Common myeloid progenitor, CD34-positive (primary cell): ENCODE measurements at regions of chr7 and their contacts with region 1.

Region 1: GRCh38 chr7:71733107-71733870 is 601.3 kb downstream of the GALNT17 start:
- DNase-seq: peak; percentile 72 to 84 (median 79)
- H3K4me3 ChIP-seq: peak overlapping the region in 4 of 7 experiments; percentile 27 to 58 (median 54)
- H3K27ac ChIP-seq: no peak overlapping the region
- H3K4me1 ChIP-seq: peaks cover 0 to 5% (median 3%) of the 10 kb centered on the region in 4 experiments
- H3K27me3 ChIP-seq: peaks cover 0 to 5% (median 0%) of the 10 kb centered on the region in 5 experiments

Region 2: GRCh38 chr7:70829221-70830059 is 903.8 kb before region 1 on chr7:
- CTCF ChIA-PET with region 1: interaction called, 11 read pairs
- POLR2A ChIA-PET with region 1: no interaction called
- DNase-seq: peak; percentile 53 to 79 (median 75)
- H3K4me3 ChIP-seq: peak overlapping the region in 5 of 7 experiments; percentile 6 to 63 (median 43)
- H3K27ac ChIP-seq: no peak overlapping the region
- H3K4me1 ChIP-seq: peaks cover 0 to 7% (median 7%) of the 10 kb centered on the region in 4 experiments
- H3K27me3 ChIP-seq: peaks cover 0 to 17% (median 9%) of the 10 kb centered on the region in 5 experiments

Region 3: GRCh38 chr7:70856866-70857630 is 876.2 kb before region 1 on chr7:
- CTCF ChIA-PET with region 1: interaction called, 48 read pairs
- POLR2A ChIA-PET with region 1: no interaction called
- DNase-seq: peak; percentile 46 to 66 (median 50)
- H3K4me3 ChIP-seq: no peak overlapping the region
- H3K27ac ChIP-seq: no peak overlapping the region
- H3K4me1 ChIP-seq: no peaks in the 10 kb centered on the region
- H3K27me3 ChIP-seq: no peaks in the 10 kb centered on the region

Region 4: DNA sequence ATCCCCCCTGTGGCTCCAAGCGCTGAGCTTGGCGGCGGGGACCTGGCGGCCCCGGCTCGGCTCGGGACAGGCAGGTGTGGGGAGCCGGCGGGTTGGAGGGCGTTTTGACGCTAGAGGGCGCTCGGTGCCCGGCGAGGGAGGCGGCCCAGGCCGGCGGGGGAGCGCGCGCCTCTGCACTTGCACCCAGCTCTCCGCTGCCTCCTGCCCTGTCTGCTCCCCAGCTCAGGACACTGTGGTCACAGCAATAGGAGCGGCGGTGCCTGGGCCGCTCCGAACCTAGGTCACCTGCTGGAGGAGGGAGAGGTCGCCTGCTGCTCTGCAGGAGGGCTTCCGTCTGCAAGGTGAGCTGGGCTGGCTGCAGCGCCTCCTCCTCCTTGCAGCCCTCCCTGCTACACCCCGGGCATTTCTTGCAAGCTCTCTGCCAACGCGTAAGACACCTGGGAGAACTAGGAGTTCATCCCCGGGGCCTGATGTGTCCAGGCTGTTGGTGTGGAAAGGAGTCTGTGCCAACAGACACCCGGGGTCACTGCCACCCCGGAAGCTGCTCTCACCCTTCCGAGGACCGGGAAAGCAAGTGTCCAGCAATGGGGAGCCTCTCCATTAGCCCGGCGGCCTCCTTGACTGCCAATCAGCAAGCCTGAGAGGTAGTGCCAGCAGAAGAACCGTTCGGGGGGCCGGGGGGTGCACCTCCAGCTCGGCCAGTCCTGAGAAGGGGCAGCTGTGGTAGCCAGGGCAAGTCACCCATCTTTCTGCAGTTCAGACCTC is 19.1 kb after region 1 on chr7:
- CTCF ChIA-PET with region 1: interaction called, 12 read pairs
- POLR2A ChIA-PET with region 1: no interaction called
- DNase-seq: peak; percentile 48 to 75 (median 71)
- H3K4me3 ChIP-seq: peak overlapping the region in 5 of 7 experiments; percentile 8 to 69 (median 36)
- H3K27ac ChIP-seq: no peak overlapping the region
- H3K4me1 ChIP-seq: peaks cover 0 to 13% (median 9%) of the 10 kb centered on the region in 4 experiments
- H3K27me3 ChIP-seq: no peaks in the 10 kb centered on the region

Region 5: DNA sequence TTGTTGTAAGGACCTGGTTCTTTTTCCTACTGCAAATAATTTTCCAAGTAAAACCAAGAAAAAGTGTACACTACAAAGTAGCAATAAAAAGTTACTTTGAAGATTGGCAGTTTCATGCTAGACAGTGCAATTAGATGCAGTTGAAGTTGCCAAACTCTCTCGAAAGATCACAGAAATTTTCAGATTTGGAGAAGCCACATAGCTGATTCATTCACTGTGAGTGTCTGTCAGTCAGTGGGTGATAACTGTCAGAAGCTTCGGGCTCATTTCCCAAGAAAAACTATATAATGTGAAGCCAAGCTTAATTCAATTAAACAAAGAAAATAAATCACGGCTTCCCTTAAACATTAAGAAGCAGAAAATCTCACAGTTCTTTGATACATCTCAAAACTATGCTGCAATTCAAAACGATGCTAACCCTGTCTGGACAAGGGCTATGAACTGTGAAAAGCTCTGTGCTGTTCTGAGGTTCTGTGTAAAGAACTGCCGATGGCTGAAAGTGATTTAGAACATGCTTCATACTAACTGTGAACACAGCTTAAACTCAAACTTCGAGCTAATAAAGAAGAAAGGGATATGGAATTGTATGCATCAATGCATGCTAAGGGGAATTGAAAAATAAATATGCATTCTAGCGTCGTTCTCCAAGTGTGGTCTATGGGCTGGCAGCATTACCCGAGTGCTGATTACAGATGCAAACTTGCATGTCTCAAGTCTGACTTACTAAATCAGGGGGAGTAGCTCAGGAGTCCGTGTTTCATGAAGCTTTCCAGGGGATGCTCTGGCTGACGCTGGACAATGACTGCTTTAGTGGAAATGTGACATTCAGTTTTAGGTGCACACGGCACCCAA is 121.5 kb after region 1 on chr7:
- CTCF ChIA-PET with region 1: no interaction called
- POLR2A ChIA-PET with region 1: no interaction called
- DNase-seq: no peak
- H3K4me3 ChIP-seq: no peak overlapping the region
- H3K27ac ChIP-seq: no peak overlapping the region
- H3K4me1 ChIP-seq: no peaks in the 10 kb centered on the region
- H3K27me3 ChIP-seq: no peaks in the 10 kb centered on the region

Region 6: DNA sequence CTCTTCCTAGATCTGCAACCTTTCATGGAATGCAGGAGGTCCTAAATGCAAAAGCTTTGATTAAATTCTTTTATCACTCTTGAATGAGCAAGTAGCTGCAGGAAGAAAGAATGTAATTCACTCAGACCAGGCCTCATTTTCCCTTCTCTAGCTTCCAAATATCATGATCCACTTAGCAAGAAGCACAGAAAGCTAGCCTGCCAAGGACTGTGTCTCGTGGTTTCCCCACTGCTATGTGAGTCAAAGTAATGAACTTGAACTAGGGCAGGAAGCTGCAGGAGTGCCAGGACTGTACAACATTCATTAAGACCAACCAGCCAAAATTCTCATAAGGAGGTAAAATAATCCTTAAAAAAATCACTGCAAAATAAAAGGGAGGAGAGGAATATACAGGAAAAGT is 299.6 kb after region 1 on chr7:
- CTCF ChIA-PET with region 1: no interaction called
- POLR2A ChIA-PET with region 1: no interaction called
- DNase-seq: peak in 1 of 3 donors; percentile 40
- H3K4me3 ChIP-seq: no peak overlapping the region
- H3K27ac ChIP-seq: no peak overlapping the region
- H3K4me1 ChIP-seq: peaks cover 0 to 25% (median 9%) of the 10 kb centered on the region in 4 experiments
- H3K27me3 ChIP-seq: no peaks in the 10 kb centered on the region